AG04449 (cell line): ENCODE measurements at regions of chr9 and their contacts with region 1.

Region 1: GRCh38 chr9:16992138-16992537 is 121.7 kb upstream of the BNC2 start:
- DNase-seq: no peak
- H3K4me3 ChIP-seq: no peak overlapping the region
- CTCF ChIP-seq: no peak

Region 2: DNA sequence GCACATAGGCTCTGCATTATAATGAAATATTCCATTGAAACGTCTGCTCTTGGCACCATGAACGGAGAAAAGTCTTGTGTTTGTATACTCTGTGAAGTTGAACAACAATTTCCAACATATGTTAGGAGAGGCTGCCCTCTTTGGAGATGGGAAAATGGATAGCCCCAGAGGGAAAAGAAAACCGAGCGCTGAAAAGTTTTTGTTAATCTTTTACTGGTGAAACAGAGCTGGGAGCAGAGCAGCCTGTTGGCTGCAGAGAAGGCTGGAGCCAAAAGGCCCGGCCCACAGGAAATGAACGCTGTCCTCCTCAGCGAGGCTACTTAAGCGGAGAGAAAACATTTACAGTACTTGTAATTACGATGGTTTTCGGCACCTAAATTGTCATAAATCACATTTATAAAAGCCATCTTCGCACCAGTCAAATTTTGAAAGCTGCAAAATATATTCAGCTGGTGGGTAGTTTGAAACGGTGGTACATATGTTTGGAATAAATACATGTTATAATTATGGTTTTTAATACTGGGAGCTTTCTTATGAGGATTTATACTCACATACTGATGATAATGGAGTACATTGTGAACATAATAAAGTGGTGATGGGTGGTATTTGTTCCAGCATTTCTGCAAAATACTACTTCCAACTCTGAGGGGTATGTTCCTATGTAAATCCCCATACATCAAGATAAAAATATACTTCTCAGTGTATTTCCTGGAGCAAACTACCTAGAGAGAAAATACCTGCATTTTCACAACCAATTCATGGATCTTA is 13.1 kb after region 1 on chr9:
- CTCF ChIA-PET with region 1: interaction called, 22 read pairs
- POLR2A ChIA-PET with region 1: no interaction called
- DNase-seq: no peak
- H3K4me3 ChIP-seq: peak overlapping the region; percentile 12
- CTCF ChIP-seq: no peak